HEK293T (cell line): ENCODE measurements at regions of chr3 and their contacts with region 1.

Region 1: GRCh38 chr3:157572559-157573270 is 69.5 kb upstream of the VEPH1 start:
- DNase-seq: peak; percentile 54

Region 2: DNA sequence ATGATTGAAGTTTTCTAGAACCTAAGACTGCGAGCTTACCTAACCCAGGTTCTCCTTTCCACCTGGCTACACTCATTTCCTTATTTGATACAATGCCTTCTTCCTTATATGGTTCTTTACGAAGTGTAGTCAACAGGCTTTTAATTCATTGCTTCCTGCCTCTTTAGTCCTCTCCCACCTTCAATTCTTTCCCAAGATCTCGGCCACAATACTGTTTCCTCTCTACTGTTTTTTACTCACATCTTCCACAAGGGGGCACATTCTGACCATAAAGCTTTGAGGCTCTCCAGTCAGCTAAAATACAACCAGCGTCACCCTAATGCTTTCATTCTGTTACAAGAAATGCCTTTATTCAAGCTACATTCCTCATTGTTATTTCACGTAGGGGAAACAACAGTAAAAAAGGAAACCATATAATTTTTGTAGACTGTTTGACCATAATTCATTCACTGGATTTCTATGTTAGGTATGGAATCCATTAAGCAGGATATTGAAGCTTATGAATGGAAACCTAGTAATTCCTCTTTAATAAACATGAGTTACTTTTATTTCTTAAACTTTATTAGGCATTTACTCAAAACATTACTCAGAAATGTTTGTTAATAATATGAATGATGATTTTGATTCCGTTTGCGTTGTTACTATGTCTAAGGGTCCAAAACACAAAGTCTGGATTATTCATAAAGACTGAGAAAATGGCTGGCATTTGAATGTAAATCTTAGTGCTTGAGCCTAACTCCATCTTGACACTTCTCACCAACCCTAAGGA is 40.0 kb before region 1 on chr3:
- CTCF ChIA-PET with region 1: interaction called, 24 read pairs
- POLR2A ChIA-PET with region 1: no interaction called
- DNase-seq: peak; percentile 67